Activated CD8-positive, alpha-beta memory T cell treated with anti-CD3 and anti-CD28 coated beads, Interleukin-2, amount 10 ng/mL, durations not matched to agents 7 days and 5 days (primary cell): ENCODE measurements at regions of chr2 and their contacts with region 1.

Region 1: GRCh38 chr2:218216674-218217359 is at the start of gene ARPC2:
- DNase-seq: peak; percentile 96
- ATAC-seq: peak; percentile 74
- H3K4me3 Mint-ChIP-seq: peak within 1 kb of the TSS; percentile 87
- H3K27ac Mint-ChIP-seq: peak within 1 kb of the TSS; percentile 93
- H3K4me1 Mint-ChIP-seq: peaks cover 30% of the 10 kb centered on the region
- H3K27me3 Mint-ChIP-seq: peaks cover 2% of the 10 kb centered on the region
- total RNA-seq, gene ARPC2: 742 to 839 TPM

Region 2: GRCh38 chr2:218229239-218229638 is 12.4 kb after region 1 on chr2:
- CTCF ChIA-PET with region 1: interaction called, 25 read pairs
- DNase-seq: peak; percentile 80
- ATAC-seq: peak; percentile 88
- H3K4me3 Mint-ChIP-seq: peak overlapping the region; percentile 42
- H3K27ac Mint-ChIP-seq: peak overlapping the region; percentile 90
- H3K4me1 Mint-ChIP-seq: peaks cover 75% of the 10 kb centered on the region
- H3K27me3 Mint-ChIP-seq: no peaks in the 10 kb centered on the region